PC-9 (cell line): ENCODE measurements at regions of chr2 and their contacts with region 1.

Region 1: DNA sequence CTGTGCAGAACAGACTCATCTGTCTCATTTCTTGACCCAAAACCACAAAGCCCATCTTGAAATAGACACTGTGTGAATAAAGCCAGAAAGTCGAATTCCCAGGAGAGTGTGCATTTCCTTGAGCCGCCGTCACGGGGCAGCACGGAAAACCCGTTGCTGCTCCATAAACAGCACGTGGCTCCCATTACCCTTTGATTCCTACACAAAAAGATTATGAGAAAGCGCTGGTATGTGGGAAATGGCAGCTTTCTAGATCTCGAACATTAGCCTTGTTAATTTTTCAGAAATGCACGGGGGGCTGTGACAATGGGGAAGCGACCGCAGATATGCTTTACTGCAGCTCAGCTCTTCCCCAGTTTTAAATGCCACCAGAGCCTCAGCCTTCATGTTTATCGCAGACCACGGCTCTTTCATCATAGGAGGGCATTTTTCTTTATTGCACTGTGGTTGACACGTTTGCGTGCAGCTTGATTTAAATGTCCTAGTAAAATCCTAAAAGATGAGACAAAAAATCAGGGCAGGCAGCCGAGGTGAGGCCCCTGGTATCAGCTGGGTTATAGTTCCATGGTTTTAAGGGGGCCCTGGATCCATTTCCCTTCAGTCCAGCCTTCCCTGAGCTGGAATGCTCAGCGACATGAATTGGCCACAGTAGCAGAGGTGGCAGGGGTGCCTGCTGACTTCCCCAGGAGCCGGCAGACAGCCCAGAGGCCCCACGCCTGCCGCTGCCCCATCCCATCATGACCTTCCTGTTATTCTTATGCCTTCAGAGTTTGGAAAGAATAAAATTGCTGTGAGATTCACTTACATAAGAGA is 249.3 kb downstream of the NDUFA10 start:
- DNase-seq: no peak
- H3K4me3 ChIP-seq: no peak overlapping the region
- H3K27ac ChIP-seq: no peak overlapping the region
- H3K4me1 ChIP-seq: no peaks in the 10 kb centered on the region
- H3K27me3 ChIP-seq: peaks cover 99% of the 10 kb centered on the region
- CTCF ChIP-seq: no peak

Region 2: DNA sequence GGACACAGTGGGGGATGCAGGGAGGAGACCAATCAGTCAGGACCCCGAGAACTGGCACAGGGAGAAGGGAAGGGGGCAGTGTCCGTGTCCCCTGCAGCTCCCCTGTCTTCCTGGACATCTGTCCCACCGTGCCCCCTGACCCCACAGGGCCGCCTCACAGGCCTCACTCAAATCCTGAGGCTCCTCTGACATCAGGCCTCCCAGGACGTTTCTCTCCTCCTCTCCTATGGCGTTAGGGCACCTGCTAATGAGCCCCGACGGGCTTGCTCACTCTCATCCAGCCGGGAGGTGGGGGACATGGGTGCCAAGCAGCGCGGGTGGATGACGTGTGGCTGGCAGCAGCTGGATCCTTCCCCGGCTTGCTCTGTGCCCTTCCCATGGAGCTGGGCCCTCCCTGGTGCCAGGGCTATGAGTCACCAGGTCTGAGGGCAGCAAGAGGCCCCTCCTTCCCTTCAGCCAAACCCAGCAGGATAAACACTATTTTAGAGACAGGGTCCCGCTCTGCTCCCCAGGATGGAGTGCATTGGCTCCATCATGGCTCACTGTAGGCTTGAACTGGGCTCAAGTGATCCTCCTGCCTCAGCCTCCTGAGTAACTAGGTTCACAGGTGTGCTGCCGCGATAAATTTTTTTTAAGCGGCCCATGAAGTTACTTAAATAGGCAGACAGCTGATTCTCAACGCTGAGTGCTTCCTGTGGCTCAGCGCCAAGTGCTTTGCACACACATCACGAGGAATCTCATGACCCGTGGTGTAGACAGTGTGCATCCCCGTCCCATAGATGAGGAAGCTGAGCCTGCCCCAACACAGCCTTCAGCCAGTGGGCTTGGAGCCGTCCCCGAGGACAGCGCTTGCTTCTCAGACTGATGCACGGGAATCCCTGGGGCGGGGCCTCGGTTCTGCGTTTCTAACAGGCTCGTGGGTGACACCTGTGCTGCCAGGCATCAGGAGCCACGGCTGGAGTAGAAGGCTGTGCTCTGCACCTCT is 310.5 kb before region 1 on chr2:
- CTCF ChIA-PET with region 1: no interaction called
- POLR2A ChIA-PET with region 1: no interaction called
- intact Hi-C with region 1: no loop called
- DNase-seq: peak in 1 of 2 experiments; percentile 64
- H3K4me3 ChIP-seq: no peak overlapping the region
- H3K27ac ChIP-seq: no peak overlapping the region
- H3K4me1 ChIP-seq: no peaks in the 10 kb centered on the region
- H3K27me3 ChIP-seq: peaks cover 97% of the 10 kb centered on the region
- CTCF ChIP-seq: no peak

Region 3: DNA sequence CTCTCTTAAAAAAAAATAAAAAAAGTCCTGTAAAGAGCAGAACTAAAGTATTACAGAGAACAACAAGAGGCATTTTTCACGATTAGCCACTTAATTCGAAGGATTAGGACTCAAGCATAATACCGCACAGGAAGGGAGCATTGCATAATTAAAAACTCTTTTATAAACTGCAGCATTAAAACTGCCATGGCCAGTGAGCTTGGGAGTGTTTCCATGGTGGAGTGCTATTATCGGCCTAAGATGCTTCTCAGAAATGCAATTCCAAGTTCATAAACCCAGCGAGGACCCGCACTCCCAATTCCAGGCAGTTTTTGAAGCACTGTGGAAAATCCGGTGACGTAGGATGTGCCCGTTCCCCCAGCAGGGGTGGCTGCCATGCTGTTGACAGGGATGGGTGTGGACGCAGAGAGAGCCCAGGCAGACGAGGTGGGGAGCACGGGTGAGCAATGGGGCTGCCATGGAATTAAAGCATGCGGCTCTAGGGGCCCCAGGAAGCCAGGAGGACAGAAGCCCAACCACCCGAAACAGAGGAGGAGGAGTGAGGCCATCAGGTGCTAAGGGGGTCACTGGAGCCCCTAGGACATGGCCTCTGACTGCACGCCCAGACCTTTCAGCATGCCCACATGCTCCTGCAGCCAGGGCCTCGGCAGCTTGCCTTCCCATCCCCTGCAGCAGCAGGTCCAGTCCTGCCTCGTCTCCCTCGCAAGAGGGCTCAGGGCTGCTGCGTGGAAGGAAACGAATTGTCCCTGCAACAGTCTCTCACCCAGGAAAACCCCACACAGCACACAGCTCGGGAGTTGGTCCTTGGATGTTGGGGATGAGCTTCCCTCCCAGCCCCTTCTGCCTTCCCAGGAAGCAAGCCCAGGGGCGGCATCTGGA is 15.9 kb after region 1 on chr2:
- CTCF ChIA-PET with region 1: no interaction called
- POLR2A ChIA-PET with region 1: interaction called, 10 read pairs
- intact Hi-C with region 1: no loop called
- DNase-seq: no peak
- H3K4me3 ChIP-seq: no peak overlapping the region
- H3K27ac ChIP-seq: no peak overlapping the region
- H3K4me1 ChIP-seq: no peaks in the 10 kb centered on the region
- H3K27me3 ChIP-seq: peaks cover 92% of the 10 kb centered on the region
- CTCF ChIP-seq: no peak